PC-3 (cell line): ENCODE measurements at regions of chr2 and their contacts with region 1.

Region 1: DNA sequence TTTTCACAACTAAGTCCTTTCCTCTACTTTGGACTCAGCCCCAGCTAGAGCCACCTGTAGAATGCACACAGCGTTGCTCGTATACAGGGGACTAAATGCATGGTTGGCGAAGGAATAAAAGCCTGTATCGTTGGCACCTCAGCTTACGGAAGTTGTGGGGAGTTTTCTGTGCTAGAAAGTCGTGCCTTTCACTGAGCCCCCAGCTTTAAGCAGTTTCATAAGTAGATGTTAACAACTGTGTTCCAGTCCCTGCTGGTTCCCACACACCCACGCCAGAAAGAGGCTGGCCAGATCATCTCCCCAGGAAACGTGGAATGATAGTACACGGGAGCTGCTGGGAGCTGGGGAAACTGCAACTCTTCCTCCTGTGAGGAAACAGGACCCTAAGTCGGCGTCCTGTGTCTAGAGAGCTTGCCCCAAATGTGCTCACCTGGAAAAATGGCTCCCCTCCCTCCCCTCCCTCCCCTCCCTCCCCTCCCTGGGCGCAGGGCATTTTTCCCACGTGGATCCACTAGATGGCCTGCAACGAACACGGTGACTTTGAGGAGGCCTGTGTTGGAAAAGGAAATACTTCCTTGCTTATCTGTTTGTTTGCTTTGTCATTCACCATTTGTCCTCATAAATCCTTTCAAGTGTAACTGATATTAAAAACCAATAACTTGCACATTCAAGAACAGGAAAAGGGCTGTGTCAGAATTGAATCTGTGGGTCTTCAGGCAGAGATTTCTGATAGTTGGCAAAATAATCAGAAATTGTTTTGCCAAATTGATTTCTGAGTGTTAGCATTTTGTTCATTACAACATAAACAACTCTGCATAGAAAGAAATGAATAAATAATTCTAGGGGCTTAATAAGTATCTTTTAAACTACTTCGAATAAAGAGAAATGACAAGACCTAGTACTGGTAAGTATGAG is 43.9 kb upstream of the RFX8 start:
- DNase-seq: peak; percentile 94
- ATAC-seq: peak; percentile 43
- H3K4me3 ChIP-seq: peak overlapping the region; percentile 46
- H3K27ac ChIP-seq: peak overlapping the region; percentile 100
- H3K4me1 ChIP-seq: peaks cover 53% of the 10 kb centered on the region
- H3K27me3 ChIP-seq: no peaks in the 10 kb centered on the region
- CTCF ChIP-seq: peak; percentile 67

Region 2: DNA sequence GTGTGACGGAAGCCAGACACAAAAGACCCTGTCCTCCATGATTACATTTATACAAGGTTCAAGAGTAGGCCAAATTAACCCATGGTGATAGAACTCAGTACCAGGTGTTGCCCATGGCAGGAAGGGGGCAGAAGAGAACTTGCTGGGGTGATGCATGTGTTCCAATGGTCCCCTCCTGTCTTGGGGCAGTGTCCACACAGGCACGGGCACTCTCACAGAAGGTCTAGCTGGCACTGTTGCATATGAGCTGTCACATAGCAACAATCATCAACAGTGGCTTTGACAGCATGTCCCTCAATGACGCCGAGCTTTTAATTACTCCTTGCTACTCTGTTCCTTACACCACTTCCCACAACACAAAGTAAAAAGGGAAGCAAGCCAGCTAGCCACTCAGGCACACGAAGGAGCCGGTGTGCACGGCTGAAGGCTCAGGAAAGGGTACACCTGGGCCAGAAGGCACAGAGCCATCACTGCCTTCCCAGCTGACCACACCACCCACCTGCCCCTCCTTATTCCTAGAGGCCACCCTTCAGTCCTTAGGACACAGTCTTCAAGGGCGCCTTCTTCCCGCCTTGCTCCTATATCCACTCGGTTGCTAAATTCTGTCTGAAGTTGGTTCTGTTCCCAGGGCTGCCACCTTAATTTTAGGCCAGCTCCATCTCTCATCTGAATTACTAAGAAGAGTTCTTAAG is 487.8 kb before region 1 on chr2:
- CTCF ChIA-PET with region 1: no interaction called
- POLR2A ChIA-PET with region 1: no interaction called
- intact Hi-C with region 1: no loop called
- DNase-seq: no peak
- ATAC-seq: peak; percentile 19; the same call in 1 of the 2 replicates
- H3K4me3 ChIP-seq: no peak overlapping the region
- H3K27ac ChIP-seq: no peak overlapping the region
- H3K4me1 ChIP-seq: no peaks in the 10 kb centered on the region
- H3K27me3 ChIP-seq: no peaks in the 10 kb centered on the region
- CTCF ChIP-seq: 0 out of 2 replicates have a peak, but pooled peaks have one; percentile 18

Region 3: DNA sequence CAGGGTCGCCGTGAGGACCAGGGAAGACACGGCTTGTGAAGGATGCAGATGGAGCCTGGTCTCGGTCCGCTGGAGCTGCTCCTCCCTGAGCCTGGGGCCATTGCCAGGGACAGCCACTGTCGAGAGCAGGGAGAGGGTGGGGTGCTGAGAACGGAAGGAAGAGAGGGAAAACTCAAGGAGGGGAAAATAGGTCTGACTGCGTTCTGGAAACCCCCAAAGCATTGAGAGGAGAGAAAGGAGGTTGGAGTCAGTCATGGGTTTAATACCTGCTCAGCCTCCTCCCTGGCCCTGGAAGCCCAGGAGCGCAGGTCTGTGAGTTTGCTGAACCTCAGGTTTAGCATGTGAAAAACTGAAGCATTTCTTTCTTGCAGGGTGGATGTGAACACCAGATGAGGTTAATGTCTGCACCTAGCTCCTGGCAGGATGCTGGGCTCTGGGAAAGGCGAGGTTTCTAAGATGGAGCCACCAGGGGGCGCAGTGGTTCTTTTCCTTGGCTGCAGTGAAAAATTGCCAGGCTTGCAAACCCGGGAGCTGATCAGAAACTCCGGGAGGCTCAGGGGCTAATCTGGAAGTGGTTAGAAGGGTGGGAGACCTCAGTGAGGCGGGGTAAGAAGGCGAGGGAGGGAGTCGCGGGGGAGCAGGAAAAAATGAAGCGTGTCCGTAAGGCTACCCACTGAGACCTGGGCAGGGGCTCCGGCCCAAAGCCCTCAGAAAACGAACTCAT is 176.8 kb before region 1 on chr2:
- CTCF ChIA-PET with region 1: interaction called, 3 read pairs
- POLR2A ChIA-PET with region 1: no interaction called
- intact Hi-C with region 1: loop called (anchors 1 kb)
- DNase-seq: peak; percentile 90
- ATAC-seq: peak; percentile 87
- H3K4me3 ChIP-seq: no peak overlapping the region; the same call in 1 of the 2 replicates
- H3K27ac ChIP-seq: peak overlapping the region; percentile 35
- H3K4me1 ChIP-seq: peaks cover 42% of the 10 kb centered on the region
- H3K27me3 ChIP-seq: no peaks in the 10 kb centered on the region
- CTCF ChIP-seq: peak; percentile 92

Region 4: GRCh38 chr2:101446869-101447268 is 72.0 kb before region 1 on chr2:
- CTCF ChIA-PET with region 1: no interaction called
- POLR2A ChIA-PET with region 1: interaction called, 6 read pairs
- intact Hi-C with region 1: loop called (anchors 1 kb)
- DNase-seq: peak; percentile 95
- ATAC-seq: peak; percentile 90
- H3K4me3 ChIP-seq: peak overlapping the region; percentile 15; the same call in 1 of the 2 replicates
- H3K27ac ChIP-seq: peak overlapping the region; percentile 99
- H3K4me1 ChIP-seq: peaks cover 49% of the 10 kb centered on the region
- H3K27me3 ChIP-seq: no peaks in the 10 kb centered on the region
- CTCF ChIP-seq: no peak

Region 5: GRCh38 chr2:101697124-101698013 is 178.5 kb after region 1 on chr2 and contains the start of gene MAP4K4:
- CTCF ChIA-PET with region 1: interaction called, 3 read pairs
- POLR2A ChIA-PET with region 1: interaction called, 9 read pairs
- intact Hi-C with region 1: loop called (anchors 1 kb)
- DNase-seq: peak; percentile 84
- ATAC-seq: peak; percentile 59
- H3K4me3 ChIP-seq: peak within 1 kb of the TSS; percentile 96
- H3K27ac ChIP-seq: peak within 1 kb of the TSS; percentile 64
- H3K4me1 ChIP-seq: peaks cover 17% of the 10 kb centered on the region
- H3K27me3 ChIP-seq: no peaks in the 10 kb centered on the region
- CTCF ChIP-seq: peak; percentile 27; the same call in 1 of the 2 replicates
- total RNA-seq, gene MAP4K4: 133 and 167 TPM in 2 replicates

Region 6: DNA sequence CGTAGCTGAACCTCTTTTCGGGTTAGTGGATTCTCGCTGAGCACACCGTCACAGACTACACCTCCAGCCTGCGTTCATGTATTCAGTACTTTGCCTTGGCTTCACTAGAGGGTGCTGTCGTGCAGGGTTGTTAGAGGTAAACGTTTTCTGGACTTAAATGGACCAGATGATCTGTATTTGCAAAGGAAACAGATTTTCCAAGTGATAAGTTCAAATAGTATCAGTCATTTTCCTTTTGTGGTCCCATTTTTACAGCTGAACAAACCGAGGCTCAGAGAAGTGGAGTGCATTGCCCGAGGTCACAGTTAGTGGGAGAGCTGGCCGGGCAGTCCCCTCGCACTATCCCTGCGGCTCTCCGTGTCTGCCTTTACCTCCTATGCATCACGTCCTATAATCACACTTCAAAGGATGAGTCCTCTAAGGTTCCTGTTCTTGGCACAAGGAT is 304.5 kb after region 1 on chr2:
- CTCF ChIA-PET with region 1: no interaction called
- POLR2A ChIA-PET with region 1: no interaction called
- intact Hi-C with region 1: loop called (anchors 1 kb)
- DNase-seq: peak; percentile 67
- ATAC-seq: no peak
- H3K4me3 ChIP-seq: no peak overlapping the region
- H3K27ac ChIP-seq: peak overlapping the region; percentile 78
- H3K4me1 ChIP-seq: peaks cover 71% of the 10 kb centered on the region
- H3K27me3 ChIP-seq: no peaks in the 10 kb centered on the region
- CTCF ChIP-seq: peak; percentile 69